ENCODE measurements at regions of chr3 and their contacts with region 1.

Region 1: GRCh38 chr3:48635222-48636021 is at the start of gene SLC26A6:
- DNase-seq: peak; percentile 100
- CTCF ChIP-seq: peak; percentile 74

Region 2: GRCh38 chr3:48543271-48543866 is 92.1 kb before region 1 on chr3:
- CTCF ChIA-PET with region 1: no interaction called
- POLR2A ChIA-PET with region 1: no interaction called
- DNase-seq: no peak
- CTCF ChIP-seq: no peak

Region 3: GRCh38 chr3:48556793-48557626 is 78.4 kb before region 1 on chr3 and contains the start of gene PFKFB4:
- CTCF ChIA-PET with region 1: interaction called, 11 read pairs
- POLR2A ChIA-PET with region 1: no interaction called
- DNase-seq: peak; percentile 99
- CTCF ChIP-seq: no peak

Region 4: GRCh38 chr3:48609088-48610005 is 26.1 kb before region 1 on chr3 and contains the start of gene UQCRC1:
- CTCF ChIA-PET with region 1: interaction called, 18 read pairs
- POLR2A ChIA-PET with region 1: no interaction called
- DNase-seq: peak; percentile 99
- CTCF ChIP-seq: peak; percentile 68

Region 5: DNA sequence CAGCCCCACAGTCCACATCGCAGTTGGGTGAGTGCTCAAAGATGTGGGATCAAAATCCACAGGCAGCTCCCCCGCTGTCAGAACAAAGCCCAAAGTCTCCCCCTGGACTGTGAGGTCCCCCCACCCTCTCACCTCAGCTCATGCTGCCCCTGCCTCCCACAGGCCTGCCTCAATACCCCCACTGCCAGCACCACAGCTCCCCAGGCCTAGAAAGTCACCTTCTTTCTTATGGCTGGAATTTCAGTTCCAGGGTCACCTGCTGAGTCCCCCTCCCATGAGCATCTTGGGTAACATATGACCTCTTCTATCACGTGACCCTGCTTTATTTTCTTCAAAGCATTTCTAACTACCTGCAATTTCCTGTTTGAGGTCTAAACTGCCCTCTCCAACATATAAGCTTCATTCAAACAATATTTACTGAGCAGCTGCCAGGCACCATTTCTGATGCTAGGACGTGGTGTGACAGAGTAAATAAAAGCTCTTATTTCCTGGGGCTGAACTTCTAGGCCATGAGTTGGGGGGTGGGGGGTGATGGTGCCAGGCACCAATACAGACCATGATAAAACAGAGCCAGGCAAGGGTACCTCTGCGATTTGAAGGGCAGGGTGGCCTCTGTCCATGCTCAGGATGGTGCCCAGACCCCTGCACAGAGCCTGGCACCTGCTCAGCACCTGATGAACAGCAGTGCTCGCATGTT is 11.4 kb before region 1 on chr3:
- CTCF ChIA-PET with region 1: interaction called, 35 read pairs
- POLR2A ChIA-PET with region 1: interaction called, 4 read pairs
- DNase-seq: no peak
- CTCF ChIP-seq: no peak

Region 6: GRCh38 chr3:48656061-48656840 is 20.8 kb after region 1 on chr3:
- CTCF ChIA-PET with region 1: interaction called, 43 read pairs
- POLR2A ChIA-PET with region 1: interaction called, 4 read pairs
- DNase-seq: peak; percentile 91
- CTCF ChIP-seq: peak; percentile 80

Region 7: GRCh38 chr3:48663415-48664312 is 28.2 kb after region 1 on chr3:
- CTCF ChIA-PET with region 1: interaction called, 28 read pairs
- POLR2A ChIA-PET with region 1: interaction called, 4 read pairs
- DNase-seq: peak; percentile 100
- CTCF ChIP-seq: peak; percentile 86

Region 8: DNA sequence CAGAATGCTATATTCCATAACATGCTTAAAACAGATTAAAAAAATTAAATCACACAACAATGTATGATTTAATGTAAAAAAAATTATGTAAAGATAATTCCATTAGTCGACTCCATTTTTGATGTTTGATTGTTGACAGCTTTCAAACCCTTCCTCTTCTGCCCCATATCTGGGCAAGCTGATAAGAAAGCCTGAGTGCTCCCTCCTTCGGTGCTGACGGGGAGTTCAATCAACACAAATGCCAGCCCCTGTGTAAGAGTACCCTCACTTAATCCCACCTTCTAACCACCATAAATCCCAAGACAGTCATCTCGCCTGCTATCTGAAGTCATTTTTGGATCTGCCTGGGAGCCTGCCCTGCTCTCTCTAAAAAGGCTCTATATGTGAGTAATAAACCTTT is 141.4 kb after region 1 on chr3:
- CTCF ChIA-PET with region 1: no interaction called
- POLR2A ChIA-PET with region 1: no interaction called
- DNase-seq: no peak
- CTCF ChIP-seq: no peak

Measured in GM10248 (cell line).